GM12878 (cell line): ENCODE measurements at regions of chr6 and their contacts with region 1.

Region 1: GRCh38 chr6:114108119-114109002 is 137.4 kb upstream of the HDAC2 start:
- DNase-seq: no peak
- ATAC-seq: peak; percentile 87
- H3K4me3 ChIP-seq: no peak overlapping the region
- H3K27ac ChIP-seq: no peak overlapping the region
- H3K4me1 ChIP-seq: no peaks in the 10 kb centered on the region
- H3K27me3 ChIP-seq: no peaks in the 10 kb centered on the region
- CTCF ChIP-seq: peak; percentile 65 to 72 (median 70)
- EP300 ChIP-seq: no peak
- POLR2A ChIP-seq: no peak
- RAD21 ChIP-seq: peak; percentile 62

Region 2: DNA sequence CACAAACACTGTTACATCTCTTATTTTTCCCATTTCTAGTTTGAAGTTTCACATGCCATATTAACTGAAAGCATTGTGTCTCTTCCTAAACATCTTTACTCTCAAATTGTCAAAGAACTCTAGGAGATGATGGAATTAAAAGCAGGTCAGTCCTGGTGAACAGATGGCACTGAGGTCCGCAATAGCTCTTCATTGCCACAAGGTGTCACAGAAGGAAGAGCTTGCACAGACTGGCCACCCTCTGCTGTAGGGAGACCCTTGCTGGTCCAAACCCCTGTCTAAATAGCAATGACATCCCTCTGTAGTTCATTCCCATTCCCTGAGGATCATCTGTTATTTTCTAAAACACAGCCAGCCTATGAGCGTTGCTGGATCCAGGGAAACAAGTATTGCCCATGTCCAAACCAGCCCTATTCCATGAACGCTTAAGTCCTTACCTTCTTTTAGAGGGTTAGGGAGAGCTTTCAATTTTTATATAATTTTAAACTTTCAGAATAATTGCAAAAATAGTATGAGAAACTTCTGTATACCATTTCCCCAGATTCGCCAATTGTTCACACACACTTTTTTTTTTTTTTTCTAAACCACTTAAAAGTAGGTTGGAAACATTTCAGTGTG is 127.3 kb before region 1 on chr6:
- CTCF ChIA-PET with region 1: interaction called, 34 read pairs
- POLR2A ChIA-PET with region 1: no interaction called
- RAD21 ChIA-PET with region 1: interaction called, 6 read pairs
- SMC1A ChIA-PET with region 1: interaction called, 4 read pairs
- in situ Hi-C with region 1: no loop called
- intact Hi-C with region 1: loop called (anchors 2 kb)
- DNase-seq: no peak
- ATAC-seq: peak; percentile 92
- H3K4me3 ChIP-seq: no peak overlapping the region
- H3K27ac ChIP-seq: no peak overlapping the region
- H3K4me1 ChIP-seq: no peaks in the 10 kb centered on the region
- H3K27me3 ChIP-seq: no peaks in the 10 kb centered on the region
- CTCF ChIP-seq: peak; percentile 25 to 57 (median 45); a peak in 5 of 6 replicates
- EP300 ChIP-seq: no peak
- POLR2A ChIP-seq: no peak
- RAD21 ChIP-seq: 0 out of 2 replicates have a peak, but pooled peaks have one; percentile 15

Region 3: GRCh38 chr6:113994918-113995342 is 113.4 kb before region 1 on chr6:
- CTCF ChIA-PET with region 1: interaction called, 27 read pairs
- POLR2A ChIA-PET with region 1: no interaction called
- RAD21 ChIA-PET with region 1: interaction called, 5 read pairs
- SMC1A ChIA-PET with region 1: interaction called, 9 read pairs
- in situ Hi-C with region 1: no loop called
- intact Hi-C with region 1: loop called (anchors 1 kb)
- DNase-seq: no peak
- ATAC-seq: peak; percentile 96
- H3K4me3 ChIP-seq: no peak overlapping the region
- H3K27ac ChIP-seq: no peak overlapping the region
- H3K4me1 ChIP-seq: no peaks in the 10 kb centered on the region
- H3K27me3 ChIP-seq: no peaks in the 10 kb centered on the region; a peak in 1 of 4 replicates
- CTCF ChIP-seq: peak; percentile 48 to 68 (median 54)
- EP300 ChIP-seq: no peak
- POLR2A ChIP-seq: no peak
- RAD21 ChIP-seq: peak; percentile 57

Region 4: GRCh38 chr6:114096561-114097172 is 11.7 kb before region 1 on chr6:
- CTCF ChIA-PET with region 1: interaction called, 37 read pairs
- POLR2A ChIA-PET with region 1: no interaction called
- RAD21 ChIA-PET with region 1: interaction called, 3 read pairs
- SMC1A ChIA-PET with region 1: interaction called, 5 read pairs
- in situ Hi-C with region 1: no loop called
- intact Hi-C with region 1: no loop called
- DNase-seq: no peak
- ATAC-seq: peak; percentile 63
- H3K4me3 ChIP-seq: no peak overlapping the region
- H3K27ac ChIP-seq: no peak overlapping the region
- H3K4me1 ChIP-seq: no peaks in the 10 kb centered on the region
- H3K27me3 ChIP-seq: no peaks in the 10 kb centered on the region
- CTCF ChIP-seq: peak; percentile 53 to 66 (median 62)
- EP300 ChIP-seq: no peak
- POLR2A ChIP-seq: no peak
- RAD21 ChIP-seq: peak; percentile 71

Region 5: GRCh38 chr6:114121913-114122645 is 13.7 kb after region 1 on chr6:
- CTCF ChIA-PET with region 1: interaction called, 13 read pairs
- POLR2A ChIA-PET with region 1: no interaction called
- RAD21 ChIA-PET with region 1: interaction called, 3 read pairs
- SMC1A ChIA-PET with region 1: interaction called, 3 read pairs
- in situ Hi-C with region 1: no loop called
- intact Hi-C with region 1: no loop called
- DNase-seq: no peak
- ATAC-seq: no peak
- H3K4me3 ChIP-seq: no peak overlapping the region
- H3K27ac ChIP-seq: no peak overlapping the region
- H3K4me1 ChIP-seq: no peaks in the 10 kb centered on the region
- H3K27me3 ChIP-seq: no peaks in the 10 kb centered on the region; a peak in 1 of 4 replicates
- CTCF ChIP-seq: no peak
- EP300 ChIP-seq: no peak
- POLR2A ChIP-seq: no peak
- RAD21 ChIP-seq: no peak

Region 6: GRCh38 chr6:114144887-114145851 is 36.8 kb after region 1 on chr6:
- CTCF ChIA-PET with region 1: no interaction called
- POLR2A ChIA-PET with region 1: no interaction called
- RAD21 ChIA-PET with region 1: no interaction called
- SMC1A ChIA-PET with region 1: no interaction called
- in situ Hi-C with region 1: no loop called
- intact Hi-C with region 1: no loop called
- DNase-seq: no peak
- ATAC-seq: no peak
- H3K4me3 ChIP-seq: no peak overlapping the region
- H3K27ac ChIP-seq: no peak overlapping the region
- H3K4me1 ChIP-seq: no peaks in the 10 kb centered on the region
- H3K27me3 ChIP-seq: no peaks in the 10 kb centered on the region
- CTCF ChIP-seq: no peak
- EP300 ChIP-seq: no peak
- POLR2A ChIP-seq: no peak
- RAD21 ChIP-seq: no peak

Region 7: DNA sequence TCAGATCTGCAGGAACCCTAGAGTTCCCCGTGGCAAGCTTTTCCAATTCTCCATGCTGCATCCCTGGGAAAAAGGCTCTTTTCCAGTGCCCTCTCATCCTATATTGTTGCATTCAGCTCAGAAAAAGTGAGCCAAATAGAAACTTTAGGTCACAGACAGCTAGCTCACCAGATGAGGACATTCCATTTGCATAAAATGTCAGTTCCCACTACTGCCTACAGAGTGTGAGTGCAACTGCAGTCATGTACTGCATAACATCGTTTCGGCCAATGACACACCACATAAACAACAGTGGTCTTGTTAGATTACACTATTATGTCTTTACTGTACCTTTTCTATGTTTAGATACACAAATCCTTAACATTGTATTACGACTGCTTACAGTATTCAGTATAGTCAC is 225.9 kb after region 1 on chr6:
- CTCF ChIA-PET with region 1: no interaction called
- POLR2A ChIA-PET with region 1: no interaction called
- RAD21 ChIA-PET with region 1: no interaction called
- SMC1A ChIA-PET with region 1: no interaction called
- in situ Hi-C with region 1: no loop called
- intact Hi-C with region 1: no loop called
- DNase-seq: no peak
- ATAC-seq: peak; percentile 31; the same call in 1 of the 3 replicates
- H3K4me3 ChIP-seq: no peak overlapping the region
- H3K27ac ChIP-seq: no peak overlapping the region
- H3K4me1 ChIP-seq: no peaks in the 10 kb centered on the region
- H3K27me3 ChIP-seq: no peaks in the 10 kb centered on the region
- CTCF ChIP-seq: no peak
- EP300 ChIP-seq: no peak
- POLR2A ChIP-seq: no peak
- RAD21 ChIP-seq: no peak